Activated CD4-positive, alpha-beta memory T cell treated with anti-CD3 and anti-CD28 coated beads, Interleukin-2, amount 10 ng/mL, durations not matched to agents 7 days and 5 days (primary cell): ENCODE measurements at regions of chr1 and their contacts with region 1.

Region 1: DNA sequence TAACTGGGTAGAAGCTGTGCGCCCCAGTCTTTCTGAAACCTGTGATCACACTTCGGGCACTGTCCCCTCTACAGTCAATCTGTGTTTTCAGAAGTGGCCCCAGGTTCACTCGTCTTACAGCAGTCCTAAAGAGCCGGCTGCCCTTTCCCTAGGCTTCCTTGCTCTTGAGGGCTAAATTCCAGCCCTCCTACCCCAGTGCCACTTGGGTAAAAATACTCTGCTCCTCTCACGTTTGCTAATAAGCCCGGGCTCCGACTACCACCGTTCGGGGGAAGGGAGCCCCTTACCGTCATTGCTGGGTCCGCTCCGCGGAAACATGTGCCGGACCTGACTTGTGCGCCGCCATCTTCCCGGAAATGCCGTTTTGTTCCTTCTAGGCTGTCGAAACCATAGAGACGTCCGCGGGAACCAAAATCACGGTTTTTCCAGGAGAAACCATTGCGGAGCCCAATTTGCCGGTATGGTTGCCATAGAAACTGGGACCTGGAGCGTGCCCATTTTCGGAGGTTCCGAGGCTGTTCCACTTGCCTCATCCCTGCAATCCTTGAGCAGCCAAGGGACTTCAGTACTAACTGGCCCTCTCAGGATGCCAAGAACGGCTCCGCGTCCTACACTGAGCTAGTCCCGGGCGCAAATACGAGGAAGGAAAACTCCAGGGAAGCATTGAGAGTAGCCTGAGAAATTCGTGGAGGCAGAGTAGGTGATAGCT is at the start of gene GPATCH4:
- DNase-seq: peak; percentile 88
- H3K4me3 Mint-ChIP-seq: peak within 1 kb of the TSS; percentile 98
- H3K27ac Mint-ChIP-seq: peak within 1 kb of the TSS; percentile 88
- H3K4me1 Mint-ChIP-seq: peaks cover 35% of the 10 kb centered on the region
- H3K27me3 Mint-ChIP-seq: no peaks in the 10 kb centered on the region
- total RNA-seq, gene GPATCH4: 19.0 to 20.6 TPM

Region 2: DNA sequence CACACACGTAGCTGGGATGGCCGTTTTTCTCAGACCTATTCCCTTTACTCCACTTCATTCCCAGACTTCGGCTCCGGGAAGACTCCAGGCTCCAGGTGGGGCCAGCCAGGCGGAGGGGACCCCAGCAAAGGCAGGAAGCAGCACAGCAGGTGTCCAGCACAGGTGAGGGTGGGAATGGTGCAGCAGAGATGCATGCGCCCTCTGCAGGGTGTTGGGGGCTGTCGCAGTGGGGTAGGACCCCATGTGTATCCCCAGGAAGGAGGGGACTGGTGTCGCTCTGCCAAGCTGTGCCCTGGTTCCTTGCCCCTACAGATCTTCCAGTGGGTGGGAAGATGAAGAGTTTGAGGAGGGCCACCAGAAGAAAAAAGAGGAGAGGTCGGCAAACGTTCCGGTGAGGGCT is 16.5 kb before region 1 on chr1:
- CTCF ChIA-PET with region 1: interaction called, 6 read pairs
- POLR2A ChIA-PET with region 1: interaction called, 45 read pairs
- DNase-seq: no peak
- H3K4me3 Mint-ChIP-seq: no peak overlapping the region
- H3K27ac Mint-ChIP-seq: no peak overlapping the region
- H3K4me1 Mint-ChIP-seq: peaks cover 9% of the 10 kb centered on the region
- H3K27me3 Mint-ChIP-seq: peaks cover 2% of the 10 kb centered on the region

Region 3: GRCh38 chr1:157081707-157082106 is 480.4 kb after region 1 on chr1:
- CTCF ChIA-PET with region 1: no interaction called
- POLR2A ChIA-PET with region 1: no interaction called
- DNase-seq: no peak
- H3K4me3 Mint-ChIP-seq: no peak overlapping the region
- H3K27ac Mint-ChIP-seq: no peak overlapping the region
- H3K4me1 Mint-ChIP-seq: no peaks in the 10 kb centered on the region
- H3K27me3 Mint-ChIP-seq: peaks cover 24% of the 10 kb centered on the region